ENCODE measurements at regions of chr20 and their contacts with region 1.

Region 1: GRCh38 chr20:53652090-53652858 is 58.6 kb upstream of the ZNF217 start:
- DNase-seq: peak; percentile 93
- ATAC-seq: peak; percentile 76
- H3K4me3 ChIP-seq: peak overlapping the region; percentile 30; the same call in 1 of the 2 replicates
- H3K27ac ChIP-seq: peak overlapping the region; percentile 99
- H3K4me1 ChIP-seq: peaks cover 39% of the 10 kb centered on the region
- H3K27me3 ChIP-seq: no peaks in the 10 kb centered on the region
- CTCF ChIP-seq: no peak
- EP300 ChIP-seq: peak; percentile 68 to 72; a peak in 2 of 4 replicates
- POLR2A ChIP-seq: no peak
- RAD21 ChIP-seq: peak; percentile 17; the same call in 1 of the 2 replicates

Region 2: DNA sequence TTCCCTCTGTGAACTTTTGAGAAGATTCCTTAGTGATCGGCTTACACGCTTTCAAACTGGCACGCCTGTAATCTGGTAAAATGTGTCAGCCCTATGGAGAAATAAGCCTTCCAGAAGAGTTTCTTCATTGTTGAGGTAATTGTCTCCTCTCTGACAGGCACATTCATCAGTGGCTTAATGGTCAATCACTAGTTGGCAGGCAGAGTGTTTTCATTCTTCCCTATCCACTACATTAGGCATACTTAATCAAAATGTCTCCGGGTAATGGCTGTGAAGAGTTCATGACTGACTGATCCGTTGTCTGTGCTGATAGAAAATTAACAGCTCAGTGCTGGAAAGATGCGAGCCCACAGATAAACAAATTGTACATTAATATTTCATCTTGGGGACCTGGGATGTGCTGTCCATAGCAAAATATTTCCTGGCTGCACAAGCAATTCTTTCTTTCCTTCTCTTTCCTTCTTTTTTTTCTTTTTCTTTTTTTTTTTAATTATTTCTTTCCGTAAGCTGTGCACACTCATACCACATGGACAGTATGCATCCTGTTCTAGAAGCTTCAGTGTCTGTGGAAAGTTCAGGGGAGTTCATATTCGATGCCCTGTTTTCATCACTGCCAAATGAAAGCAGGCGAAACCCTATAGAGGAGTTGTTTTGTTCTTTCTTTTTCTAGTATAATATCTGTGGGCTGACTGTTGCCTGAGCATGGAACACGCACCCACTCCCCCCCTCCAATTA is 648.7 kb before region 1 on chr20:
- CTCF ChIA-PET with region 1: no interaction called
- POLR2A ChIA-PET with region 1: no interaction called
- RAD21 ChIA-PET with region 1: no interaction called
- SMC1A ChIA-PET with region 1: no interaction called
- in situ Hi-C with region 1: no loop called
- intact Hi-C with region 1: no loop called
- DNase-seq: no peak
- ATAC-seq: no peak
- H3K4me3 ChIP-seq: no peak overlapping the region
- H3K27ac ChIP-seq: no peak overlapping the region
- H3K4me1 ChIP-seq: peaks cover 14% of the 10 kb centered on the region
- H3K27me3 ChIP-seq: no peaks in the 10 kb centered on the region
- CTCF ChIP-seq: no peak
- EP300 ChIP-seq: no peak
- POLR2A ChIP-seq: no peak
- RAD21 ChIP-seq: no peak

Region 3: DNA sequence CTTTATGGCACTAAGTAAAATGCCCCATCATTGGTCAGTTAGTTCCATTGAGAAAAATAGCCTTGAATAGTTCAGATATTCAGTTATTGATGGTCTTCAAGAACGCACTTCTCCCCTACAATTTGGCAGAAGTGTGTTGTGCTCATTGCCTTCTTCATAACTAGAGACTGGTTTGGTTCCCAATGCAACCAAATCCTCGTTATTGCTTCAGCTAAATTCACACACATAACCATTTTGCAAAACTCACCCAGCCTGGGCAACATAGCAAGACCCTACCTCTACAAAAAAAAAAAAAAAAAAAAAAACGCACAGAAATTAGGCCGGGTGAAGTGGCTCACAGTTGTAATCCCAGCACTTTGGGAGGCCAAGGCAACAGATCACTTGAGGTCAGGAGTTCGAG is 90.8 kb before region 1 on chr20:
- CTCF ChIA-PET with region 1: no interaction called
- POLR2A ChIA-PET with region 1: no interaction called
- RAD21 ChIA-PET with region 1: no interaction called
- SMC1A ChIA-PET with region 1: no interaction called
- in situ Hi-C with region 1: no loop called
- intact Hi-C with region 1: no loop called
- DNase-seq: no peak
- ATAC-seq: no peak
- H3K4me3 ChIP-seq: no peak overlapping the region
- H3K27ac ChIP-seq: no peak overlapping the region
- H3K4me1 ChIP-seq: no peaks in the 10 kb centered on the region
- H3K27me3 ChIP-seq: no peaks in the 10 kb centered on the region
- CTCF ChIP-seq: no peak
- EP300 ChIP-seq: no peak
- POLR2A ChIP-seq: no peak
- RAD21 ChIP-seq: no peak

Region 4: GRCh38 chr20:53586640-53587039 is 65.6 kb before region 1 on chr20:
- CTCF ChIA-PET with region 1: no interaction called
- POLR2A ChIA-PET with region 1: interaction called, 3 read pairs
- RAD21 ChIA-PET with region 1: interaction called, 9 read pairs
- SMC1A ChIA-PET with region 1: interaction called, 11 read pairs
- in situ Hi-C with region 1: no loop called
- intact Hi-C with region 1: loop called (anchors 2 kb)
- DNase-seq: no peak
- ATAC-seq: no peak
- H3K4me3 ChIP-seq: peak overlapping the region; percentile 83
- H3K27ac ChIP-seq: peak overlapping the region; percentile 65
- H3K4me1 ChIP-seq: peaks cover 3% of the 10 kb centered on the region
- H3K27me3 ChIP-seq: no peaks in the 10 kb centered on the region
- CTCF ChIP-seq: no peak
- EP300 ChIP-seq: no peak
- POLR2A ChIP-seq: no peak
- RAD21 ChIP-seq: no peak

Region 5: DNA sequence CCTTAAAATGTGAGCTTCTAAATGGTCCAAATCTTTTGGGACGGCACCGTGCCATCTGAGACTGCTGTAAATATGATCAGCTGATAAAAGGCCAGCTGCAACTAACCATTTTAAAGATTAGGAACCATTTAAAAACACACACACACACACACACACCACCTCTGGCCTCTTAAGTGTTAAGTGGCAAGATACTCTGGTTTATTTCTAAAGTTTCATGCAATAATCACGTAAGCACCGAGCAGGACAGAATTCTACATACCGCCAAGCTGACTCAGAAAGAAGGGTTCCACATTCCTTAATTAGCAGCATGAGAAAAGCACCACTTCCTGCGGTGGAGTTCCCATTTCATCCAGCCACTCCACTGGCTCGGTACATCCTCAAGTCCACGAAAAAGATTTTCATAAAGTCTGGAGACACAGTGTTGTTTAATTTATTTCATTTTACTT is 40.8 kb before region 1 on chr20:
- CTCF ChIA-PET with region 1: interaction called, 3 read pairs
- POLR2A ChIA-PET with region 1: no interaction called
- RAD21 ChIA-PET with region 1: interaction called, 13 read pairs
- SMC1A ChIA-PET with region 1: interaction called, 24 read pairs
- in situ Hi-C with region 1: no loop called
- intact Hi-C with region 1: loop called (anchors 5 kb)
- DNase-seq: peak; percentile 82
- ATAC-seq: peak; percentile 84
- H3K4me3 ChIP-seq: peak overlapping the region; percentile 15; the same call in 1 of the 2 replicates
- H3K27ac ChIP-seq: peak overlapping the region; percentile 87
- H3K4me1 ChIP-seq: peaks cover 15% of the 10 kb centered on the region
- H3K27me3 ChIP-seq: no peaks in the 10 kb centered on the region
- CTCF ChIP-seq: no peak
- EP300 ChIP-seq: peak; percentile 71 to 80; a peak in 3 of 4 replicates
- POLR2A ChIP-seq: no peak
- RAD21 ChIP-seq: no peak

Region 6: GRCh38 chr20:53718142-53719021 is 66.1 kb after region 1 on chr20:
- CTCF ChIA-PET with region 1: no interaction called
- POLR2A ChIA-PET with region 1: no interaction called
- RAD21 ChIA-PET with region 1: interaction called, 3 read pairs
- SMC1A ChIA-PET with region 1: interaction called, 11 read pairs
- in situ Hi-C with region 1: no loop called
- intact Hi-C with region 1: no loop called
- DNase-seq: no peak
- ATAC-seq: no peak
- H3K4me3 ChIP-seq: no peak overlapping the region
- H3K27ac ChIP-seq: no peak overlapping the region
- H3K4me1 ChIP-seq: peaks cover 22% of the 10 kb centered on the region
- H3K27me3 ChIP-seq: no peaks in the 10 kb centered on the region
- CTCF ChIP-seq: no peak
- EP300 ChIP-seq: no peak
- POLR2A ChIP-seq: no peak
- RAD21 ChIP-seq: no peak